GM12878 (cell line): ENCODE measurements at regions of chr5 and their contacts with region 1.

Region 1: GRCh38 chr5:96203761-96204160 is 229.3 kb downstream of the PCSK1 start:
- DNase-seq: no peak
- ATAC-seq: no peak
- H3K4me3 ChIP-seq: no peak overlapping the region
- H3K27ac ChIP-seq: no peak overlapping the region
- H3K4me1 ChIP-seq: no peaks in the 10 kb centered on the region
- H3K27me3 ChIP-seq: no peaks in the 10 kb centered on the region
- CTCF ChIP-seq: no peak
- EP300 ChIP-seq: no peak
- POLR2A ChIP-seq: no peak
- RAD21 ChIP-seq: no peak

Region 2: GRCh38 chr5:96017951-96018350 is 185.8 kb before region 1 on chr5:
- CTCF ChIA-PET with region 1: no interaction called
- POLR2A ChIA-PET with region 1: no interaction called
- RAD21 ChIA-PET with region 1: no interaction called
- SMC1A ChIA-PET with region 1: no interaction called
- in situ Hi-C with region 1: no loop called
- intact Hi-C with region 1: no loop called
- DNase-seq: no peak
- ATAC-seq: no peak
- H3K4me3 ChIP-seq: no peak overlapping the region
- H3K27ac ChIP-seq: no peak overlapping the region
- H3K4me1 ChIP-seq: no peaks in the 10 kb centered on the region
- H3K27me3 ChIP-seq: no peaks in the 10 kb centered on the region
- CTCF ChIP-seq: no peak
- EP300 ChIP-seq: no peak
- POLR2A ChIP-seq: no peak
- RAD21 ChIP-seq: no peak

Region 3: DNA sequence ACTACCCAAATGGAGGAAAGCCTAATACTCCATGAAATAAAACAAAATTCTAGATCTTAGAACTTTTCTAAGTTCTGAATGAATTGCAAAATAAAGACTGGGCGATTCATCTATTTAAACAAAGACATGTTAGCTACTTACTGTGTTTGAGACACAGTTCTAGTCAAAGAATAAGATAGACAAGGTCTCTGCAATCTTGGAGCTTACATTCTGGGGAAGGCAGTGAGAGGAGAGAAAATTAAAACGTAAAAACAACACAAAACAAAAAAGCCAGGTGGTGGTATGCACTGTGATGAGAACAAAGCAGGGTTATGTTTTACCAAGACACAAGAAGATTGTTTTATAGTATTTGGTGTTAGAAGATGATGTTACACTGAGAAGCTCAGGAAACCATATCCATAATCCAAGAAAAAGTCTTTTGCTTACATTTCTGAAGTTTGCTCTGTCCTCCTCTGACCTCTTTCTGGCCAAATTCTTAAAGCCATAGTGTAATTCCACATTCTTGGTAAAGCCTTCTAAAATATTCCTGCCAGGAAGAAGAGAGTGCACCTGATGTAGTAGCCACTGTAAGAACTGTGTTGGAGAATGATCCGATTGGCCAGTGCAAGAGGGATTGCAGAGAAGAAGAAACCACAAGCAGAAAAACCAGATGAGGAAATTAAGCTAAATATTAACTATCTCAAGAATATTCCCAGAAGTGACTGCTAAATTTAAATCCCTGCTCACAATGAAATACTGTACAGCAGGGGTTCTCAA is 10.9 kb after region 1 on chr5:
- CTCF ChIA-PET with region 1: interaction called, 5 read pairs
- POLR2A ChIA-PET with region 1: interaction called, 5 read pairs
- RAD21 ChIA-PET with region 1: interaction called, 4 read pairs
- SMC1A ChIA-PET with region 1: interaction called, 21 read pairs
- in situ Hi-C with region 1: no loop called
- intact Hi-C with region 1: no loop called
- DNase-seq: no peak
- ATAC-seq: no peak
- H3K4me3 ChIP-seq: no peak overlapping the region
- H3K27ac ChIP-seq: no peak overlapping the region
- H3K4me1 ChIP-seq: no peaks in the 10 kb centered on the region
- H3K27me3 ChIP-seq: no peaks in the 10 kb centered on the region
- CTCF ChIP-seq: no peak
- EP300 ChIP-seq: no peak
- POLR2A ChIP-seq: no peak
- RAD21 ChIP-seq: no peak